ENCODE measurements at regions of chr6 and their contacts with region 1.

Region 1: GRCh38 chr6:24431045-24431451 is 28.3 kb downstream of the MRS2 start:
- DNase-seq: no peak
- ATAC-seq: peak; percentile 54; the same call in 1 of the 3 replicates
- H3K4me3 ChIP-seq: no peak overlapping the region
- H3K27ac ChIP-seq: no peak overlapping the region
- H3K4me1 ChIP-seq: no peaks in the 10 kb centered on the region
- H3K27me3 ChIP-seq: no peaks in the 10 kb centered on the region
- CTCF ChIP-seq: peak; percentile 41 to 59 (median 44); a peak in 5 of 6 replicates
- EP300 ChIP-seq: no peak
- POLR2A ChIP-seq: no peak
- RAD21 ChIP-seq: peak; percentile 58

Region 2: GRCh38 chr6:24440897-24441598 is 10.0 kb after region 1 on chr6:
- CTCF ChIA-PET with region 1: interaction called, 13 read pairs
- POLR2A ChIA-PET with region 1: no interaction called
- RAD21 ChIA-PET with region 1: no interaction called
- SMC1A ChIA-PET with region 1: interaction called, 3 read pairs
- in situ Hi-C with region 1: no loop called
- intact Hi-C with region 1: no loop called
- DNase-seq: no peak
- ATAC-seq: no peak
- H3K4me3 ChIP-seq: no peak overlapping the region
- H3K27ac ChIP-seq: no peak overlapping the region
- H3K4me1 ChIP-seq: no peaks in the 10 kb centered on the region
- H3K27me3 ChIP-seq: no peaks in the 10 kb centered on the region
- CTCF ChIP-seq: no peak
- EP300 ChIP-seq: no peak
- POLR2A ChIP-seq: no peak
- RAD21 ChIP-seq: no peak

Region 3: DNA sequence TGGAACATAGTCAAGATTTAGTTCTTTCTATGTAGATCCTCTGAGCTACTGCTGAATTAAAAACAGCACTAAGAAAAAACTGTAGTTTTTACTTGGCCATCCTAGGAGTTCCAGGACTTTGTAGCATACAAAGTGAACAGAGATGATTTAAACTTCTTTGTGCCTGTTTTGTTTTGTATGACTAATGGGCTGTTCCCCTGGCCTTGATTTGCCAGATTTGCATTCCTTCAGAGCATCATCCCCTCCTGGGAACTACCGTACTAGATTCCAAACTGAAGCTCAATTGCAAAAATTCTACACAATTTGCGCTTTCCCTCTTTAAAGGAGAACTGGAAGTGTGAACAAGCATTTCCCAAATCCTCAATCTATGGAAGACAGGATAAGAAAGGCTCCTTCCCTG is 258.9 kb after region 1 on chr6:
- CTCF ChIA-PET with region 1: no interaction called
- POLR2A ChIA-PET with region 1: no interaction called
- RAD21 ChIA-PET with region 1: no interaction called
- SMC1A ChIA-PET with region 1: no interaction called
- in situ Hi-C with region 1: no loop called
- intact Hi-C with region 1: loop called (anchors 2 kb)
- DNase-seq: no peak
- ATAC-seq: no peak
- H3K4me3 ChIP-seq: no peak overlapping the region
- H3K27ac ChIP-seq: no peak overlapping the region
- H3K4me1 ChIP-seq: no peaks in the 10 kb centered on the region; the same call in 1 of the 2 replicates
- H3K27me3 ChIP-seq: no peaks in the 10 kb centered on the region
- CTCF ChIP-seq: no peak
- EP300 ChIP-seq: no peak
- POLR2A ChIP-seq: no peak
- RAD21 ChIP-seq: no peak

Measured in GM12878 (cell line).